HEK293 (cell line): ENCODE measurements at regions of chr17 and their contacts with region 1.

Region 1: DNA sequence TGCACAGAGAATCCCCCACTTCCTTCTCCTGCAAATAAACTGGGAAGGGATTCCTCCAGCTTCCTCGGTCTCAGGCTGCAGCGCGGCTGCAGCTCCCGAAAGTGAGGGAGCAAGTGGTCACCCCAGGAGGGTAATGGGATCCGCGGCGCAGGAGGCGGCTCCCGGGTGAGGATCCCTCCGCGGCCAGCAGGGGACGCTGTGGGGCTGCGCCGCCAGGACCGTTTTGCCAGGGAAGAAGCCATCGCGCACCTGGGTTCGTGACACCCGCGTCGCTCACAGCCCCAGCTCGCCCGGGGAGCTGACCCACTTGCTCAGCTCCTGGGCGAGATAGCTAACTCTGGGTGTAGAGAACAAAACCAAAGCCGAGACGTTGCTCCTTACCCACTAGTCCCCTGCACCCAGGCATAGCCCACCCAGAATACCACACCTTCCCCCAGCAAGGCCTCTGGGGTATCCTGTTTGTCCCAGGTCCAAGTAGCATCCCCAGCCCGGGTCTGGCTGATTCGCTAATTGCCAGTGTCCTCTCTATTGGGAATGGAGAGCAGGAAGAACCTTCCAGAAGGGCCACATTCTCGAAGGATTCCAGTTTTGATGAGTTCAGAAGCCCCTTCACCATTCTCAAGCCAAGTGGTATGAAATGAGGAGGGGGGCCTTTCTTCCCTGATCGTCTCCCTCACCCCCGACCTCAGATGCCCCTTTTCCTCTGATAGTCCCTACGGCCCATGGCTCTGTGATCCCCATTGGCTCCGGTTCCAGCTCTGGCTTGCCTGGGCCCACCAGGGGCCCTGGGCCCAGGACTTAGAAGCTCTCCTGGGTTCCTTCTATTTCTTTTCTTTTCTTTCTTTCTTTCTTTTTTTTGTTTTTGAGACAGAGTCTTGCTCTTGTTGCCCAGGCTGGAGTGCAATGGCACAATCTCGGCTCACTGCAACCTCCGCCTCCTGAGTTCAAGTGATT is 14.1 kb downstream of the CYGB start:
- H3K4me3 ChIP-seq: no peak overlapping the region
- H3K27ac ChIP-seq: no peak overlapping the region
- H3K4me1 ChIP-seq: peaks cover 8% of the 10 kb centered on the region
- CTCF ChIP-seq: peak; percentile 98

Region 2: DNA sequence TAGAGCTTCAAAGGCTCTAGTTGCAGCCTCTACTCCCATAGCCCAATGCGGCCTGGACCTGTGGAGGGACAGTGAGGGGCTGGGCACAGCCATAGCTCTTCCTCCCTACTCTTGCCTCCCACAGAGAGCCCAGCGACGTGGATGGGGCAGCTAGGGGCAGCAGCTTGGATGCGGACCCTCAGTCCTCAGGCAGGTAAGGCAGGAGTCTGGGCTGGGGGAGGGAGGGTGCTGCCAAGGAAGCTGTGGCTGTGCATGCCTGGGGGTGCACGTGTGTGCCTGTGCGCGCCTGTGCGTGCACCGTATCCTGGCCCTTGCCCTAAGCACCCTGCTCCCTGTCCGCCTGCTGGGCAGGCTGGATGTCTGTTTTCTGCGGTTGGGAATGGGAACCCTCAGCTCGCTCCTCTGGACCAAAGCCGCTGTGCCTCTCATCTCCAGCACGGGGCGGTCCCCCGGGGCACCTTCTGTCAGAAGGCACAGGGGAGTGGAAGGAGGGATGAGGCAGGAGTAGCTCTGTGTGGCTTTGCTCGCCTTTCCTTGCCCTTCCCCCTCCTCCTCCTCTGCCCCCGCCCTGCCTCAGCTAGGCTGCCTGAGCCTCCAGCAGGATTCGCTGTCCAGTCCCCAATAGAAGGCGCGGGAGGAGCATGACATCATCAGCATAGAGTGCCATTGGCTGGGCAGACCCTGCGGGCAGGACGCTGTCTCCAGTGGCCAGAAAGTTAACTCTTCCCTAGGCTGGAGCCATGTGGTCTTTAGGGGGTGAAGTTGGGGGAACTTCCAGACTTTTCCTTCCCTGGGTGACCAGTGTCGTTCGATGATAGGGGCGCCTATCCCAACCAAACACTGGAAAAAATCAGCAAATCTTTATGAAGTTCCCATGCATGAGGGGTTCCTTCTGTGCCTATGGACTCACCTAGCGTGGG is 17.3 kb after region 1 on chr17:
- CTCF ChIA-PET with region 1: interaction called, 87 read pairs
- POLR2A ChIA-PET with region 1: interaction called, 4 read pairs
- H3K4me3 ChIP-seq: peak overlapping the region; percentile 12
- H3K27ac ChIP-seq: peak overlapping the region; percentile 63
- H3K4me1 ChIP-seq: peaks cover 8% of the 10 kb centered on the region
- CTCF ChIP-seq: peak; percentile 81

Region 3: GRCh38 chr17:76547184-76547641 is 23.9 kb after region 1 on chr17:
- CTCF ChIA-PET with region 1: interaction called, 87 read pairs
- POLR2A ChIA-PET with region 1: interaction called, 3 read pairs
- H3K4me3 ChIP-seq: no peak overlapping the region
- H3K27ac ChIP-seq: no peak overlapping the region
- H3K4me1 ChIP-seq: peaks cover 21% of the 10 kb centered on the region
- CTCF ChIP-seq: peak; percentile 86

Region 4: GRCh38 chr17:76726231-76726775 is 202.9 kb after region 1 on chr17 and contains the start of gene JMJD6:
- CTCF ChIA-PET with region 1: interaction called, 13 read pairs
- POLR2A ChIA-PET with region 1: no interaction called
- H3K4me3 ChIP-seq: peak within 1 kb of the TSS; percentile 93
- H3K27ac ChIP-seq: peak within 1 kb of the TSS; percentile 97
- H3K4me1 ChIP-seq: peaks cover 7% of the 10 kb centered on the region
- CTCF ChIP-seq: peak; percentile 7; the same call in 1 of the 2 replicates